ENCODE measurements at regions of chr2 and their contacts with region 1.

Region 1: DNA sequence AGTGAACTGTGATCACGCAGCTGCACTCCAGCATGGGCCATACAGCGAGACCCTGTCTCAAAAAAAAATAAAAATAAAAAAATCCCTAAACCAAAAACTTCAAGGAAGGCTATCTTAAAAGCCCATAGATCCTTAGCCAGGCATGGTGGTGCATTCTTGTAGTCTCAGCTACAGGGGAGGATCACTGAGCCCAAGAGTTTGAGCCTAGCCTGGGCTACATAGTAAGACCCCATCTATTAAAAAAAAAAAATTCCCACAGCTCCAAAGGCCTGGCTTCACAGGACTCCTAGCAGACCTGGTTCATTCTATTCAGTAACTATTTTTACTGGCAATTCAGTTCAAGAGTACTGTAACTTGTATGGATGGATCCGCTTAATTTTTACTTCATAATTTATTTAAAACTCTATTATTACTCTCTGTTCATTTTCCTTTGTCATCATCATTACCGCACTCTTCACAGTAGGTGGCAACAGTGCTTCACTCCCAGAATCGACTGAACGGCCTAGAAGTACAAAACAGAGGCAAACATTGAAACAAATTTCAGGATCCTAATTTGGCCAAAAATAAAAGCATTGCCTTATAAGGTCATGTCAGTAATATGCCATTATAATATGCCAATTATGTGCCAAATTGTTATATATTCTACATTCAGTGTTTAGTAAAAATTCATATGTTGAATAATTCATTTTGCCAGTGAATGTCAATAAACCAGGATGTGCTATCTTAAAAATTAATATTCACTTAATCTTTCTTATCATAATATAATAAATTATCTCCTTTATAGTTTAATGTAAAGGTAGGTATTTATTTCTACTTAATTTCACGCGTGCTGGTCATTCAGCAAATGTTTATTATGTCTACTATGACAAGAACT is 14.3 kb upstream of the STAM2 start:
- DNase-seq: peak; percentile 50 to 78 (median 59)
- H3K4me3 ChIP-seq: no peak overlapping the region
- H3K27ac ChIP-seq: no peak overlapping the region
- H3K4me1 ChIP-seq: no peaks in the 10 kb centered on the region
- H3K27me3 ChIP-seq: no peaks in the 10 kb centered on the region
- CTCF ChIP-seq: peak; percentile 44 to 89 (median 86)
- POLR2A ChIP-seq: no peak

Region 2: DNA sequence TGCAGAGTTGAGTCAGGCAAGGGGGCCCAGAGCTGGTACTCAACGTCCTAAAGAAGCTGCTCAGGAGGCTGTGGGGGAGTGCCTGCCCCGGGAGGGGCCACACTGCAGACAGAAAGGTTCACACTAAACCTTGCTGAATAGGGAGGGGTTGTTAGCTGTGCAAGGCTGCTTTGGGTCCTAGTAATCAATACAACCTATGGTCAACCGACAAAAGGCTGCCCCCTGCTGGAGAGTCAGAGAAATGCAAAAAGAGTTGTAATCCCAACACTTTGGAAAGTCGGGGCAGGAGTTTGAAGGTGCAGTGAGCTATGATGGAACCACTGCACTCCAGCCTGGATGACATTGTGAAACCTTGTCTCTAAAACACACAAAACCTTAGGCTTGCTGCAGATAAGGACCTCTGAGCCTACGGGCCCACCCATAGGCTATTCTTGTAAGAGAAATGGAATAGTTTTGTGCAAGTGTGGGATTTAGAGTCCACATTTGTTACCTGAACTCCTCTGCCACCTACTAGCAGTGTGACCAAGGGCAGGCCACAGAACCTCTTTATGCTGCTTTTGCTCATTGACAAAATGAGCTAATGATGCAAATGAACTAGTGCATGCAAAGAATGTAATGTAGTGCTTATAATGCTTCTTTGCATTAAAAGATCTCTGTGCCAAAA is 445.9 kb after region 1 on chr2:
- intact Hi-C with region 1: loop called (anchors 5 kb)
- DNase-seq: peak; percentile 45 to 84 (median 69)
- H3K4me3 ChIP-seq: no peak overlapping the region
- H3K27ac ChIP-seq: no peak overlapping the region
- H3K4me1 ChIP-seq: no peaks in the 10 kb centered on the region
- H3K27me3 ChIP-seq: no peaks in the 10 kb centered on the region
- CTCF ChIP-seq: peak; percentile 71 to 85 (median 81)
- POLR2A ChIP-seq: no peak

Measured in adrenal gland (tissue), 19 donors.